Caco-2 (cell line): ENCODE measurements at regions of chr10 and their contacts with region 1.

Region 1: DNA sequence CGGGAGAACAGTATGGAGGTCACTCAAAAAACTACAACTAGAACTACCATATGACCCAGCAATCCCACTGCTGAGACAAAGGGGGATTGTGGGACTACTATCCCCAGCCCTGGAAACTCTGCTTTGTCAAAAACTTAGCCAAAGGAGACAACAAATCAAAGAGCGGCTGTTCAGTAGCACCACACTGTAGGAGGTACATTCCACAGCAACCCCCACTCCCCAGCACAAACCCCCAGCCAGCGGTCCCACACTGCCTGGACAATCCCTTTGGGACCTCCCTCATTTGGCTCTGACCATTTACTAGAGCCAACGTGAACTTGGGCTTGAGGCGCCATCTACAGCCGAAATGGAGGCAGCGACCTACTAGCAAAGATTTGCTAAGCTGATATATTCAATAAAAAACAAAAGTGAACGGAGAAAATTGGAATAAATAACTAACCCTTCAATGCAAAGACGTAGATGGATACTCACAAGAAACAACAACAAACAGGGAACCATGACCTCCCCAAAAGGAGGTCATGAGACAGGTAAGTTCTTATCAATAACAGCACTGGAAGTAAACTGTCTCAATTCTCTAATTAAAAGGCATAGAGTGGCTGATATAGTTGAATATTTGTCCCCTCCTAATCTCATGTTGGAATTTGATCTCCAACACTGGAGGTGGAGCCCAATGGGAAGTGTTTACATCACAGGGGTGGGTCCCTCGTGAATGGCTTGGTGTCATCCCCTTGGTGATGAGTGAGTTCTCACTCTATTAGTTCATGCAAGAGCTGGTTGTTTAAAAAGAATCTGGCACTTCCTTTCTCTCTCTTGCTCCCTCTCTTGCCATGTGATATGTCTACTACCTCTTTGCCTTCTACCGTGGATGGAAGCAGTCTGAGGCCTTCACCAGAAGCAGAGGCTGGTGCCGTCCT is 119.0 kb upstream of the KCNMA1 start:
- DNase-seq: peak; percentile 69 to 71
- H3K4me3 ChIP-seq: no peak overlapping the region
- H3K4me3 Mint-ChIP-seq: no peak overlapping the region
- H3K27ac Mint-ChIP-seq: no peak overlapping the region
- H3K4me1 ChIP-seq: no peaks in the 10 kb centered on the region; the same call in 1 of the 2 replicates
- H3K4me1 Mint-ChIP-seq: peaks cover 11% of the 10 kb centered on the region
- H3K27me3 ChIP-seq: no peaks in the 10 kb centered on the region
- H3K27me3 Mint-ChIP-seq: no peaks in the 10 kb centered on the region
- CTCF ChIP-seq: peak; percentile 82 to 83

Region 2: GRCh38 chr10:77165445-77166208 is 590.9 kb before region 1 on chr10:
- CTCF ChIA-PET with region 1: interaction called, 3 read pairs
- POLR2A ChIA-PET with region 1: no interaction called
- intact Hi-C with region 1: loop called (anchors 2 kb)
- DNase-seq: peak; percentile 65 to 76
- H3K4me3 ChIP-seq: no peak overlapping the region
- H3K4me3 Mint-ChIP-seq: peak overlapping the region; percentile 51
- H3K27ac Mint-ChIP-seq: no peak overlapping the region
- H3K4me1 ChIP-seq: peaks cover 3% of the 10 kb centered on the region; the same call in 1 of the 2 replicates
- H3K4me1 Mint-ChIP-seq: peaks cover 26% of the 10 kb centered on the region
- H3K27me3 ChIP-seq: no peaks in the 10 kb centered on the region
- H3K27me3 Mint-ChIP-seq: no peaks in the 10 kb centered on the region
- CTCF ChIP-seq: peak; percentile 74 to 76

Region 3: DNA sequence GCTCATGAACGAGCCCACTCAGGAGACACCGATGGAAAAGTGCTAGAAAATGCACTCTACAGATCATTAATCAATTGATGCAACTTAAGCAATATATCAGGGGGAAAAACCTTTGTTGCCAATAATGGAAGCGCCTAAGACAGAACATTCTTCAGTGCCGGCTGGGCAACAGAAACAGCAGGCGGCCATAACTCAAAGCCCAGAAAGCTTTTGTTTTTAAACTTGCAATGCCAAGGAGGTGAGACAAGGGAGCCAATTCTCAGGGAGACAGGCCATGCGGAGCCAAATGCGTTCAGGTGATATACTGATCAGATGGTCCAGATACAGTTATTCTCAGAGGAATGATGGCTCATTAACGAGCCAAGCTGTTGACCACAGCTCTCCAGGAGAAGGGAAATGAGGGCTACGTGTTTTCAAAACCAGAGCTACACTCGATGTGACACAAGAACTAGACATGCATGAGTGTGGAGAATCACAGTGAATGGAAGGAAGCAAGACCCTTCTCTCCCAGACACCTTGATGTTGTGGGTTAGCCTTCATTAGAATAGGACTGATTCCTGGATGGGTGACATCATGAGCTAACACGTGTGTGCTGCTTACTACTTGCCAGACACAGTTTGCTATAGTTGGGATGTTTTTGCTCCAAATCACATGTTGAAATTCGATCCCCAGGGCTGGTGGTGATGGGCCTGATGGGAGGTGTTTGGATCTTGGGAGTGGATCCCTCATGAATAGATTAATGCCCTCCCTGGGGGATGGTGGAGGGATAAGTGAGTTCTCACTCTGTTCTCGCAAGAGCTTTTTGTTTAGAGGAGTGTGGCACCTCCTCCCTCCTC is 39.9 kb before region 1 on chr10:
- CTCF ChIA-PET with region 1: interaction called, 25 read pairs
- POLR2A ChIA-PET with region 1: no interaction called
- intact Hi-C with region 1: loop called (anchors 1 kb)
- DNase-seq: no peak
- H3K4me3 ChIP-seq: no peak overlapping the region
- H3K4me3 Mint-ChIP-seq: no peak overlapping the region
- H3K27ac Mint-ChIP-seq: no peak overlapping the region
- H3K4me1 ChIP-seq: peaks cover under 1% of the 10 kb centered on the region; the same call in 1 of the 2 replicates
- H3K4me1 Mint-ChIP-seq: no peaks in the 10 kb centered on the region
- H3K27me3 ChIP-seq: no peaks in the 10 kb centered on the region
- H3K27me3 Mint-ChIP-seq: no peaks in the 10 kb centered on the region
- CTCF ChIP-seq: no peak

Region 4: DNA sequence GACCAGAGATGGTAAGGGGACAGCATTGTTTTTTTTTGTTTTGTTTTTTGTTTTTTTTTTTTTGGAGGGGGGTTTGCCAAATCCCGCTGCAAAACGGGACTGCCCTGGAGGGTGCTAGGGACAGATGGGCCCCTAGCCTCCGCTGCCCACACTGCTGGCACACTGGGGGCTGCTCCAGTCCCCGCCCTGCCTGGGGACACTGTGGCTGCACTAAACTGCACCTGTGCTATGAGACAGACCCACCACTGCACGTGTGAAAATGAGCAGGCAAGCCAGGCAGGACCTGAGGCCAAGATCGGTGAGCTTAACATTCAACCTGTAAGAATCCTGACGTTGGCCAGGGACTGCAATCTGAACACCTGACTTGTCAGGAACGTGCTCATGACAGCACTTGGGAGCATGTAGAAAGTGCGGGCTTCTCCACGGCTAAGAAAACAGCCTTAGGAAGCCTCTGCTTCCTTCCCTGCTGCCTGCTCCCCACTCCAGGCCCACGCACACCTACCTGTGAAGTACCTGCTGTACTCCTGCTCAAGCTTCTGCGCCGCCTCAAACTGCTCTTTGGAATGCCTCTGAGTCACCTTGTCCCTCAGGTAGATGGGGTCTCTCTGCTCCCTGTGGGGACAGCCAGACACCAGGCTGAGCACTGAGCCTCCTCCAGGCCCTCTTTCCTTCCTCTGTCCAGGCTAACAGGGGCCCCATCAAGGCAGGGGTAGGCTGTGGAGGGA is 37.1 kb after region 1 on chr10:
- CTCF ChIA-PET with region 1: no interaction called
- POLR2A ChIA-PET with region 1: no interaction called
- intact Hi-C with region 1: no loop called
- DNase-seq: peak in 1 of 2 experiments; percentile 22
- H3K4me3 ChIP-seq: no peak overlapping the region
- H3K4me3 Mint-ChIP-seq: no peak overlapping the region
- H3K27ac Mint-ChIP-seq: no peak overlapping the region
- H3K4me1 ChIP-seq: no peaks in the 10 kb centered on the region
- H3K4me1 Mint-ChIP-seq: no peaks in the 10 kb centered on the region
- H3K27me3 ChIP-seq: no peaks in the 10 kb centered on the region
- H3K27me3 Mint-ChIP-seq: no peaks in the 10 kb centered on the region
- CTCF ChIP-seq: no peak